ENCODE measurements at regions of chr22 and their contacts with region 1.

Region 1: GRCh38 chr22:22802339-22802970 is 85.2 kb upstream of the IGLL5 start:
- DNase-seq: peak in 10 of 14 experiments; percentile 38 to 81 (median 57)
- ATAC-seq: peak; percentile 72
- H3K4me3 ChIP-seq: no peak overlapping the region
- H3K4me3 Mint-ChIP-seq: no peak overlapping the region
- H3K27ac ChIP-seq: no peak overlapping the region
- H3K27ac Mint-ChIP-seq: no peak overlapping the region
- H3K4me1 ChIP-seq: peaks cover 25% of the 10 kb centered on the region
- H3K4me1 Mint-ChIP-seq: peaks cover 55% of the 10 kb centered on the region
- H3K27me3 ChIP-seq: peaks cover 0 to 2% of the 10 kb centered on the region in 2 experiments
- H3K27me3 Mint-ChIP-seq: no peaks in the 10 kb centered on the region
- CTCF ChIP-seq: peak; percentile 83

Region 2: GRCh38 chr22:22687638-22688500 is 114.6 kb before region 1 on chr22:
- CTCF ChIA-PET with region 1: no interaction called
- POLR2A ChIA-PET with region 1: no interaction called
- intact Hi-C with region 1: no loop called
- DNase-seq: peak in 5 of 14 experiments; percentile 5 to 52 (median 38)
- ATAC-seq: peak; percentile 41
- H3K4me3 ChIP-seq: no peak overlapping the region
- H3K4me3 Mint-ChIP-seq: no peak overlapping the region
- H3K27ac ChIP-seq: no peak overlapping the region
- H3K27ac Mint-ChIP-seq: no peak overlapping the region
- H3K4me1 ChIP-seq: no peaks in the 10 kb centered on the region
- H3K4me1 Mint-ChIP-seq: no peaks in the 10 kb centered on the region
- H3K27me3 ChIP-seq: no peaks in the 10 kb centered on the region
- H3K27me3 Mint-ChIP-seq: no peaks in the 10 kb centered on the region
- CTCF ChIP-seq: peak; percentile 64

Region 3: DNA sequence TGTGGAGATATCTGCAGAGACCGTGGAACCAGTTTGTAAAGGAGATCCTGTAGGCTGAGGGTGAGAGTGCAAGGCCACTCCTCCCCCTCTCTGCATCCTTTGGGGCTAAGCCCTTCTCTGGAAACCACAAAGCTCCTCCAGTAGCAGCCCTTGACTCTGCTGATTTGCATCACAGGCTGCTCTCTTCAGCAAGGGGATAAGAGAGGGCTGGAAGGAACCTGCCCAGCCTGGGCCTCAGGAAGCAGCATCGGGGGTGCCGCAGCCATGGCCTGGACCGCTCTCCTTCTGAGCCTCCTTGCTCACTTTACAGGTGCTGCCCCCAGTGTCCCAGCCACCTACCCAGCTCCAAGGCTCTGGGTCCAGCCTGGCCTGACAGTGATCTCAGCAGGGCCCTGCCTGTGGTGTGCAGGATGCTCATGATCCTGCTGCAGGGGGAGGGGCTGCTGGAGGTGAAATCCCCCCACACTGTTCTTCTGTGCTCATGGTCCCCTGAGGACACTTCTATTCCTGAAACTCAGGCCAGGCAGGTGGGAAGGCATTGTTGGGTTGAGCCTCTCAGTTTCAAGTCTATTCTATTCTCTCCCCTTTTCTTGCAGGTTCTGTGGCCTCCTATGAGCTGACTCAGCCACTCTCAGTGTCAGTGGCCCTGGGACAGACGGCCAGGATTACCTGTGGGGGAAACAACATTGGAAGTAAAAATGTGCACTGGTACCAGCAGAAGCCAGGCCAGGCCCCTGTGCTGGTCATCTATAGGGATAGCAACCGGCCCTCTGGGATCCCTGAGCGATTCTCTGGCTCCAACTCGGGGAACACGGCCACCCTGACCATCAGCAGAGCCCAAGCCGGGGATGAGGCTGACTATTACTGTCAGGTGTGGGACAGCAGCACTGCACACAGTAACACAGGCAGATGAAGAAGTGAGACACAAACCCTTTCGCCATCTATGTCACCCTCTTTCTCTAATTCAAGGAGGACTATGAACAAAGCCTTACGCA is 16.7 kb after region 1 on chr22:
- CTCF ChIA-PET with region 1: no interaction called
- POLR2A ChIA-PET with region 1: interaction called, 13 read pairs
- intact Hi-C with region 1: loop called in 1 of 2 experiments (anchors 2 kb)
- DNase-seq: peak in 7 of 14 experiments; percentile 29 to 87 (median 58)
- ATAC-seq: peak; percentile 54
- H3K4me3 ChIP-seq: peak overlapping the region; percentile 54
- H3K4me3 Mint-ChIP-seq: peak overlapping the region; percentile 71
- H3K27ac ChIP-seq: peak overlapping the region; percentile 68 to 83
- H3K27ac Mint-ChIP-seq: peak overlapping the region; percentile 97
- H3K4me1 ChIP-seq: peaks cover 95% of the 10 kb centered on the region
- H3K4me1 Mint-ChIP-seq: peaks cover 99% of the 10 kb centered on the region
- H3K27me3 ChIP-seq: no peaks in the 10 kb centered on the region
- H3K27me3 Mint-ChIP-seq: no peaks in the 10 kb centered on the region
- CTCF ChIP-seq: no peak

Region 4: GRCh38 chr22:22848364-22848866 is 46.0 kb after region 1 on chr22:
- CTCF ChIA-PET with region 1: interaction called, 6 read pairs
- POLR2A ChIA-PET with region 1: interaction called, 6 read pairs
- intact Hi-C with region 1: loop called (anchors 1 to 2 kb)
- DNase-seq: peak; percentile 53 to 84 (median 63)
- ATAC-seq: peak; percentile 80
- H3K4me3 ChIP-seq: no peak overlapping the region
- H3K4me3 Mint-ChIP-seq: no peak overlapping the region
- H3K27ac ChIP-seq: no peak overlapping the region
- H3K27ac Mint-ChIP-seq: no peak overlapping the region
- H3K4me1 ChIP-seq: peaks cover 22% of the 10 kb centered on the region
- H3K4me1 Mint-ChIP-seq: peaks cover 64% of the 10 kb centered on the region
- H3K27me3 ChIP-seq: no peaks in the 10 kb centered on the region
- H3K27me3 Mint-ChIP-seq: no peaks in the 10 kb centered on the region
- CTCF ChIP-seq: peak; percentile 98

Region 5: DNA sequence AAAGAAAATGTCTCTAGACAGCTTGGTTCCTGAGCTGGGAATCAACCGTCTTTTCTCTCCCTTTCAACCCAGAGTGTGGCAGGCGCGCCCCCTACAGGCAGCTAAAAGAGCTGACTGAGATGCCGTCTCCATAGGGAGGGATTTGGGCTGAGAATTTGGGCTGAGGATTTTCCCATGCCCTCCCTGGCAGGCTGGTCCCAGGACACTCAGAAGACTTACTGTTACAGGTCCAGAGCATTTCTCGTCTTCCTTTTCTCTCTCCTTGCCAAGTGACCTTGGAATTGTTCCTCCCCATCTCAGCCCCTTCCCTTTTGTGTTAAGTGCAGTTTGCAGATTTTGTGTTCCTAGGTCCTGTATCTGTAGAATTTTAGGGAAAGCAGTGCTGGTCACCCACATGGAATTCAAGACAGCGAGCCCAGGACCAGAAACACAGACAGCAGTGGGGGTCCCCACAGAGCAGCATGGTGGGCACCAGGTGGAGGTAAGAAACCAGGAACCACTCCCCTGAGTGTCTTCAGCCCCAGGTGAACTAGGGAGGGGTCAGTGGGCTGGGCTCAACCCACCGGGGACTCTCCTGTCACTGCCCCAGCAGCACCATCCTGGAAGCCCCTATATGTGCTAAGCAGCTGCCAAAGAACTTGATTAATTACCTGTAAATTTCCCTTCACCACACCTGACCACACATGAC is 75.2 kb after region 1 on chr22:
- CTCF ChIA-PET with region 1: interaction called, 24 read pairs
- POLR2A ChIA-PET with region 1: interaction called, 31 read pairs
- intact Hi-C with region 1: loop called (anchors 1 kb)
- DNase-seq: peak; percentile 65 to 89 (median 75)
- ATAC-seq: peak; percentile 67
- H3K4me3 ChIP-seq: no peak overlapping the region
- H3K4me3 Mint-ChIP-seq: no peak overlapping the region
- H3K27ac ChIP-seq: no peak overlapping the region
- H3K27ac Mint-ChIP-seq: no peak overlapping the region
- H3K4me1 ChIP-seq: peaks cover 3% of the 10 kb centered on the region
- H3K4me1 Mint-ChIP-seq: no peaks in the 10 kb centered on the region
- H3K27me3 ChIP-seq: no peaks in the 10 kb centered on the region
- H3K27me3 Mint-ChIP-seq: no peaks in the 10 kb centered on the region
- CTCF ChIP-seq: peak; percentile 84

Region 6: DNA sequence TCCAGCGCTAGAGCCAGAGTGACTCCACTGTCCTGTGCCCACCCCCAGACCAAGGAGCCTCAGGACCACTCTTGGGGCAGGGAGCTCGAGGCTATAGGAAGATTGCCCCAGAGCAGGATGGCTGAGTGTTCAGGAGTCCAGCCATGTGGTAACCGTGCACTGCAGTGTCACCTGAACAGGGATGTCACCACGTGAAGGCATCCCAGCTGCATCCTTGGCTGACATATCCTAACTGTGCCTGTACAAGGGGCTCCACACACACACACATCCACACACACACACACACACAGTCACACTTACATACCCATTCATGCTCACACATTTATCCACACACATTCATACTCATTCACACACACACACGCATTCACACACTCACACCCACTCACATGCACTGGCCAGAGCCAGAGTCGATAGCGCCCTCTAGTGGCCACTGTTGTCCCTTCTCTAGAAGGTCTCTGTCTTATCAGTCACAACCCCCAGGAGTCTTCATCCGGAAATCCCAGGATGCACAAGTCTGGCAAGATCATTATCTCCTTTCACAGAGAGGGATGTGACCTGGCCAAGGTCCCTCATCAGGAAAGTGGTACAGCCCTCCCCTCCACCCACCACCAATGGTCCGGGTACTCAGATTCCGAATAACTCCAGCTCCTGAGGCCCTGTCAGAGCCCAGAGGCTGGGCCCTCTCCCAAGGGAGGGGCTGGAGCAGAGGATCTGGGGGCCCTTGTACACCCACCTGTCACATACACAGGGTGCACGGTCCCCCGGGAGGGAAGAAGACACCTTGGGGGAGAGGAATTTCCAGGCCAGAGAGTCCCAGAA is 140.3 kb after region 1 on chr22:
- CTCF ChIA-PET with region 1: interaction called, 3 read pairs
- POLR2A ChIA-PET with region 1: no interaction called
- intact Hi-C with region 1: loop called in 1 of 2 experiments (anchors 1 kb)
- DNase-seq: peak; percentile 53 to 84 (median 70)
- ATAC-seq: peak; percentile 82
- H3K4me3 ChIP-seq: no peak overlapping the region
- H3K4me3 Mint-ChIP-seq: no peak overlapping the region
- H3K27ac ChIP-seq: no peak overlapping the region
- H3K27ac Mint-ChIP-seq: no peak overlapping the region
- H3K4me1 ChIP-seq: peaks cover 7% of the 10 kb centered on the region
- H3K4me1 Mint-ChIP-seq: no peaks in the 10 kb centered on the region
- H3K27me3 ChIP-seq: no peaks in the 10 kb centered on the region
- H3K27me3 Mint-ChIP-seq: no peaks in the 10 kb centered on the region
- CTCF ChIP-seq: peak; percentile 82